ENCODE measurements at regions of chr3 and their contacts with region 1.

Region 1: GRCh38 chr3:14907043-14907966 is 40.1 kb upstream of the NR2C2 start:
- DNase-seq: peak; percentile 26
- H3K4me3 ChIP-seq: no peak overlapping the region
- H3K27ac ChIP-seq: no peak overlapping the region
- H3K4me1 ChIP-seq: peaks cover 0 to 3% (median 0%) of the 10 kb centered on the region in 4 donors
- H3K27me3 ChIP-seq: no peaks in the 10 kb centered on the region
- CTCF ChIP-seq: no peak
- EP300 ChIP-seq: no peak
- POLR2A ChIP-seq: no peak

Region 2: DNA sequence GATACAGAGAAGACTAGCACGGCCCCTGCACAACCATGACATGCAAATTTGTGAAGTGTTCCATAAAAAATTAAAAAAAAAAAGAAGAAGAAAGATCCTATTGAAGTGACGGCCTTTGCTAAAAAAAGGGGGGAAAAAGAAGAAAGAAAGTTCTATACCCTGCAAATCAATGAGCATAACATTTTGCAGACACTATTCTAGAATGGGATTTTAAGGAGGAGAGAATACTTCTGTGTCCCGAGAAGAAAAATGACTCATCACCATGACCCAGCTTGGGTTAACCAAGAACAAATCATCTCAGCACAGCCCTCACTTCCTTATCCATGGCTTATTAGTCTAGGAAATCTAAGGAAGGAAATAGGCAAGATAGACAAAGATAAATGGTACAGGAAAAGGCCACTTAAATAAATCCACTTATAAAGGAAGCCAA is 432.5 kb after region 1 on chr3:
- in situ Hi-C with region 1: no loop called
- intact Hi-C with region 1: loop called (anchors 5 kb)
- DNase-seq: no peak
- H3K4me3 ChIP-seq: no peak overlapping the region
- H3K27ac ChIP-seq: no peak overlapping the region
- H3K4me1 ChIP-seq: peaks cover 0 to 2% (median 0%) of the 10 kb centered on the region in 4 donors
- H3K27me3 ChIP-seq: no peaks in the 10 kb centered on the region
- CTCF ChIP-seq: no peak
- EP300 ChIP-seq: no peak
- POLR2A ChIP-seq: no peak

Region 3: GRCh38 chr3:15350141-15350540 is 442.8 kb after region 1 on chr3:
- in situ Hi-C with region 1: no loop called
- intact Hi-C with region 1: no loop called
- DNase-seq: no peak
- H3K4me3 ChIP-seq: no peak overlapping the region
- H3K27ac ChIP-seq: no peak overlapping the region
- H3K4me1 ChIP-seq: no peaks in the 10 kb centered on the region
- H3K27me3 ChIP-seq: no peaks in the 10 kb centered on the region
- CTCF ChIP-seq: no peak
- EP300 ChIP-seq: no peak
- POLR2A ChIP-seq: no peak

Measured in transverse colon (tissue), 4 donors.